GM12878 (cell line): ENCODE measurements at regions of chr5 and their contacts with region 1.

Region 1: GRCh38 chr5:112174959-112175594 is 244.0 kb downstream of the EPB41L4A start:
- DNase-seq: no peak
- ATAC-seq: peak; percentile 95
- H3K4me3 ChIP-seq: no peak overlapping the region
- H3K27ac ChIP-seq: no peak overlapping the region
- H3K4me1 ChIP-seq: no peaks in the 10 kb centered on the region
- H3K27me3 ChIP-seq: peaks cover 0 to 2% of the 10 kb centered on the region in 2 experiments; a peak in 1 of 4 replicates
- CTCF ChIP-seq: peak; percentile 44 to 75 (median 66)
- EP300 ChIP-seq: no peak
- POLR2A ChIP-seq: no peak
- RAD21 ChIP-seq: peak; percentile 71

Region 2: DNA sequence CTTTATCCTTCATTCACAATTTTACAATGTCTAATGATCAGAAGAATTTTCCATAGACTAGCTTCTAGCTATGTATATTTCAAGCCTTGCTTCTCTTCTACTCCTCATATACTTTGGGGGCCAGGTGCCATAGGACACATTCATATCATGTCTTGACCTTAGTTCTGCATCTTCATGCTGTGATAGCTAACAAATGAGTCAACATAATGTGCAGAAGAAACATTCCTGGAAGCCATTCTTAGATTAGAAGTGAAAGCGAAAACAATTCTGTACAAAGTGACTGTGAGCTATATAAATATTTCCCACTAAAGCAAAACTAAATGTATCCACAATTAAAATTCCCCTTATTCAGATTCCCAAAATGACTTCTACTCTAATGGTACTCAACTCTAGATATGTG is 97.9 kb before region 1 on chr5:
- CTCF ChIA-PET with region 1: no interaction called
- POLR2A ChIA-PET with region 1: no interaction called
- RAD21 ChIA-PET with region 1: no interaction called
- SMC1A ChIA-PET with region 1: no interaction called
- in situ Hi-C with region 1: no loop called
- intact Hi-C with region 1: no loop called
- DNase-seq: peak; percentile 25
- ATAC-seq: peak; percentile 81
- H3K4me3 ChIP-seq: no peak overlapping the region
- H3K27ac ChIP-seq: peak overlapping the region; percentile 6; the same call in 1 of the 2 replicates
- H3K4me1 ChIP-seq: no peaks in the 10 kb centered on the region
- H3K27me3 ChIP-seq: no peaks in the 10 kb centered on the region
- CTCF ChIP-seq: no peak
- EP300 ChIP-seq: no peak
- POLR2A ChIP-seq: no peak
- RAD21 ChIP-seq: no peak

Region 3: GRCh38 chr5:112186401-112186990 is 11.4 kb after region 1 on chr5:
- CTCF ChIA-PET with region 1: interaction called, 23 read pairs
- POLR2A ChIA-PET with region 1: no interaction called
- RAD21 ChIA-PET with region 1: interaction called, 6 read pairs
- SMC1A ChIA-PET with region 1: interaction called, 7 read pairs
- in situ Hi-C with region 1: no loop called
- intact Hi-C with region 1: no loop called
- DNase-seq: no peak
- ATAC-seq: peak; percentile 83
- H3K4me3 ChIP-seq: no peak overlapping the region
- H3K27ac ChIP-seq: no peak overlapping the region
- H3K4me1 ChIP-seq: no peaks in the 10 kb centered on the region
- H3K27me3 ChIP-seq: no peaks in the 10 kb centered on the region; a peak in 1 of 4 replicates
- CTCF ChIP-seq: peak; percentile 54 to 60 (median 56)
- EP300 ChIP-seq: no peak
- POLR2A ChIP-seq: no peak
- RAD21 ChIP-seq: peak; percentile 37

Region 4: GRCh38 chr5:112216140-112216539 is 41.1 kb after region 1 on chr5:
- CTCF ChIA-PET with region 1: interaction called, 12 read pairs
- POLR2A ChIA-PET with region 1: no interaction called
- RAD21 ChIA-PET with region 1: interaction called, 4 read pairs
- SMC1A ChIA-PET with region 1: no interaction called
- in situ Hi-C with region 1: no loop called
- intact Hi-C with region 1: no loop called
- DNase-seq: no peak
- ATAC-seq: no peak
- H3K4me3 ChIP-seq: no peak overlapping the region
- H3K27ac ChIP-seq: no peak overlapping the region
- H3K4me1 ChIP-seq: no peaks in the 10 kb centered on the region
- H3K27me3 ChIP-seq: no peaks in the 10 kb centered on the region
- CTCF ChIP-seq: no peak
- EP300 ChIP-seq: no peak
- POLR2A ChIP-seq: no peak
- RAD21 ChIP-seq: no peak

Region 5: GRCh38 chr5:112492291-112492690 is 317.2 kb after region 1 on chr5:
- CTCF ChIA-PET with region 1: interaction called, 42 read pairs
- POLR2A ChIA-PET with region 1: no interaction called
- RAD21 ChIA-PET with region 1: interaction called, 7 read pairs
- SMC1A ChIA-PET with region 1: interaction called, 9 read pairs
- in situ Hi-C with region 1: no loop called
- intact Hi-C with region 1: loop called (anchors 2 kb)
- DNase-seq: peak; percentile 12
- ATAC-seq: peak; percentile 100
- H3K4me3 ChIP-seq: no peak overlapping the region
- H3K27ac ChIP-seq: no peak overlapping the region
- H3K4me1 ChIP-seq: no peaks in the 10 kb centered on the region
- H3K27me3 ChIP-seq: no peaks in the 10 kb centered on the region; a peak in 1 of 4 replicates
- CTCF ChIP-seq: peak; percentile 79 to 86 (median 85)
- EP300 ChIP-seq: no peak
- POLR2A ChIP-seq: no peak
- RAD21 ChIP-seq: peak; percentile 69

Region 6: DNA sequence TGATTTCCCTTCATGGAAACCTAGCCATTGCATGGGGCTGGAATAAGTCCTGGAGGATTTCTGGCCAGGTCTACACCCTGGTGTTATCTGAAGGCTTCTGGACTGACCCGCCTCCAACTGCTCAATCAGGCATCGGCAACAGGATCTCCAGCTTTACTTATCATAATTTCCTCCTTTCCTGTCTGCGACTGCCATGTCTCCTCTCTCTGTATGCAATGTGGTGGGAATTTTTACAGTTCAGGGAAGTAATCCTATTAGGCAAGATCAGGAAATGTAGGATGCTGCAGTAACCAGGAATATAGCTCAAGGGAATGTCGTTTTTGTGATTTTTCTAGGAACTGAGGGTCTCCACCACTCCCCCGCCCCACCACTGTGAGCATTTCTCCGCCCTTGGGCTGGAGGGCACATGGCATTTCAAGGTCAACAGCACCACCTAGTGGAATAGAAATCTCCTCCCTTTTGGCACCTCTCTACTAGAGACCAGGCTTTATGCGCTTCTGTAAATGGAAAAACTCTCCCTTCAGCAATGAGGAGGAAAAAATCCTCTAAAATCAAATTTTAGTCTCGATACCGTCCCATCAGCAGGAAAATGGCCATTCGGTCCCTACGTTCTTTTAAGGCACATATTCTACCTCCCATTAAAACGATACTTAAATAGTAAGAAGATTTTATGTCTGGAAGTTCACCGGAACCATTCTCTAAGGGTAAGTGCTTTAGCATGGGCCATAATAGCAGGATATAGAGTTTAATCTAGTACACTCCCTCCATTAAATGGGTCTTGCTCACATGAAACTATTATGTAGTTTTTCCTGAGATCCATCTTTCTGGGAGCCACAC is 1431.4 kb after region 1 on chr5:
- CTCF ChIA-PET with region 1: no interaction called
- POLR2A ChIA-PET with region 1: no interaction called
- RAD21 ChIA-PET with region 1: no interaction called
- SMC1A ChIA-PET with region 1: no interaction called
- in situ Hi-C with region 1: no loop called
- intact Hi-C with region 1: loop called (anchors 10 kb)
- DNase-seq: peak; percentile 7
- ATAC-seq: peak; percentile 98
- H3K4me3 ChIP-seq: no peak overlapping the region
- H3K27ac ChIP-seq: no peak overlapping the region
- H3K4me1 ChIP-seq: no peaks in the 10 kb centered on the region
- H3K27me3 ChIP-seq: no peaks in the 10 kb centered on the region
- CTCF ChIP-seq: peak; percentile 63 to 82 (median 73)
- EP300 ChIP-seq: no peak
- POLR2A ChIP-seq: no peak
- RAD21 ChIP-seq: peak; percentile 96